Activated T-helper 2 cell treated with anti-CD3 and anti-CD28 coated beads, Interferon-gamma antibody, Interleukin-2, Interleukin-4, amounts not matched to agents 10 μg/mL and 5 μg/mL and 100 μg/mL, durations not matched to agents 14 hours and 24 hours and 36 hours (primary cell): ENCODE measurements at regions of chr18 and their contacts with region 1.

Region 1: GRCh38 chr18:45967007-45967706 is at the start of gene EPG5:
- DNase-seq: peak; percentile 92
- H3K4me3 Mint-ChIP-seq: peak within 1 kb of the TSS; percentile 98
- H3K27ac Mint-ChIP-seq: peak within 1 kb of the TSS; percentile 91
- H3K4me1 Mint-ChIP-seq: peaks cover 31% of the 10 kb centered on the region
- H3K27me3 Mint-ChIP-seq: no peaks in the 10 kb centered on the region
- total RNA-seq, gene EPG5: 17.1 and 17.4 TPM in 2 replicates

Region 2: GRCh38 chr18:45670281-45670962 is 296.7 kb before region 1 on chr18:
- intact Hi-C with region 1: loop called (anchors 2 kb)
- DNase-seq: peak; percentile 43
- H3K4me3 Mint-ChIP-seq: peak overlapping the region; percentile 57
- H3K27ac Mint-ChIP-seq: peak overlapping the region; percentile 88
- H3K4me1 Mint-ChIP-seq: peaks cover 66% of the 10 kb centered on the region
- H3K27me3 Mint-ChIP-seq: peaks cover 24% of the 10 kb centered on the region

Region 3: GRCh38 chr18:46173393-46174341 is 206.5 kb after region 1 on chr18:
- intact Hi-C with region 1: loop called (anchors 1 kb)
- DNase-seq: peak; percentile 90
- H3K4me3 Mint-ChIP-seq: peak overlapping the region; percentile 96
- H3K27ac Mint-ChIP-seq: peak overlapping the region; percentile 99
- H3K4me1 Mint-ChIP-seq: peaks cover 47% of the 10 kb centered on the region
- H3K27me3 Mint-ChIP-seq: no peaks in the 10 kb centered on the region